Activated naive CD4-positive, alpha-beta T cell treated with anti-CD3 and anti-CD28 coated beads for 36 hours (primary cell): ENCODE measurements at regions of chr2 and their contacts with region 1.

Region 1: GRCh38 chr2:177332041-177332991 is 60.3 kb upstream of the AGPS start:
- DNase-seq: peak; percentile 58
- H3K4me3 Mint-ChIP-seq: no peak overlapping the region
- H3K27ac Mint-ChIP-seq: no peak overlapping the region
- H3K4me1 Mint-ChIP-seq: peaks cover 16% of the 10 kb centered on the region
- H3K27me3 Mint-ChIP-seq: no peaks in the 10 kb centered on the region

Region 2: DNA sequence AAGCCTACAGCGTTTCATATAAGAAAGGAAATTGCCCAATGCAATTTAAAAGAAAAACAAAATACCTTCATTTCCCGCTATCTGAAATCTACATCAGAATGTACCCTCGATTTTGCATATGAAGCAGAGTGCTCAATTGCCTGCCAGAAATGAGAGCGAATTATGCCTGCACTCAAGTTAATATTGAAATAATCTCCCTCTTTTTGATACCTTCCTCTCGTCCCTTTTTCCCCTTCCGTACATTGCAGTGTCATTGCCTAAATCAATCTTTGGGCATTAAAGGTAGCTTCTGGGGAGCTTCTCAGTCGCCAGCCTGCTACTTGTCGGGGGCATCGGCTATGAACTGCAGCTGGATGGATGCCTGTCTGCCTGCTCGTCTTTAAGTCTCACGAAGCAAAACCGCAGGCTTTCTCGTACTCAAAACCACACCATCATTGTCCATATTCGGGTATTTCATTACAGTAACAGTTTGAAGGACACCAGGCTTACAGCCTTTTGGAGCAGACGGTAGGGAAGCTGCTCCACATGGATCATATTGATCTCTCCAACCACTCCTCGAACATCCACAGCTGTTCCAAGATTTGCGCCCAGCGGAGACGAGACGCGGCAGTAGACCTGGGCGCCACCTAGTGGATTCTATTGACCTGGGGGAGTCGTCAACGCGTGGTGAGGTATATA is 183.7 kb before region 1 on chr2:
- CTCF ChIA-PET with region 1: interaction called, 17 read pairs
- intact Hi-C with region 1: no loop called
- DNase-seq: peak; percentile 85
- H3K4me3 Mint-ChIP-seq: peak overlapping the region; percentile 82
- H3K27ac Mint-ChIP-seq: no peak overlapping the region
- H3K4me1 Mint-ChIP-seq: peaks cover 10% of the 10 kb centered on the region
- H3K27me3 Mint-ChIP-seq: peaks cover 22% of the 10 kb centered on the region

Region 3: DNA sequence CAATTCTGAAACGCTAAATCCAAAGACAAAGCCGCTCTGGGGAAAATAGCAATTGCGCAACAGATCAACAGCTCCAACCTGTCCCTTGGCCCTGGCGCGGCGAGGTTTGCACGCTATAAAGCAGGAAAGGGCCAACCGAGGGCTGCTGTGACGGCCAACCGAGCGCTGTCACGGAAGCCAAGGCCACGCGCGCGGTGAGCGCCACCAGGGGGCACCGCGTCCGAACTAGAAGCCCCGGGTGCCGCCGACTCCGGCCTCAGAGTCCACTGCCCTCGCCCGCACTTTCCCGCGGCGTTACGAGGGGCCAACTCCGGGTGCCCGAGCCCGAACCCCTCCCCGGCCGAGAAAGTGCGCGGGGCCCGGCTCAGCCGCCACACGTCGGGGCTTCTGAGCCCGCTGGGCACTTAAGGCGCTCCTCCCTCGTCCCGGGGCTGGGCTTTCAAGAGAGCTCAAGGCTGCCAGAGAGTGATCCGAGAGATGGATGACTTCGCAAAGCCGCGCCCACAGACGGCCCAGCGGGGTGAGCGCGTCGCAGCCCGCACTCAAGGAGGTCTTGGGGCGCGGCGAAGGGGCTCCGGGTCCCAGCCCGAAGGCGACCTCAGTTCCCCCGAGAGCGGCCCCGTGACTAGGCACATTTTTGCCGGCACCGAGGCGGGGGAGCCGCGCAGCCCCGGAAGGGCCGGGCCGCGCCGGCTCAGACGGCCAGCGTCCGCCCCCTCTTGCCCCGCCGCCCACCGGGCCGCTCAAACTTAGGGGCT is 68.7 kb before region 1 on chr2:
- CTCF ChIA-PET with region 1: interaction called, 25 read pairs
- intact Hi-C with region 1: loop called (anchors 1 kb)
- DNase-seq: peak; percentile 95
- H3K4me3 Mint-ChIP-seq: peak overlapping the region; percentile 92
- H3K27ac Mint-ChIP-seq: peak overlapping the region; percentile 99
- H3K4me1 Mint-ChIP-seq: peaks cover 53% of the 10 kb centered on the region
- H3K27me3 Mint-ChIP-seq: no peaks in the 10 kb centered on the region

Region 4: DNA sequence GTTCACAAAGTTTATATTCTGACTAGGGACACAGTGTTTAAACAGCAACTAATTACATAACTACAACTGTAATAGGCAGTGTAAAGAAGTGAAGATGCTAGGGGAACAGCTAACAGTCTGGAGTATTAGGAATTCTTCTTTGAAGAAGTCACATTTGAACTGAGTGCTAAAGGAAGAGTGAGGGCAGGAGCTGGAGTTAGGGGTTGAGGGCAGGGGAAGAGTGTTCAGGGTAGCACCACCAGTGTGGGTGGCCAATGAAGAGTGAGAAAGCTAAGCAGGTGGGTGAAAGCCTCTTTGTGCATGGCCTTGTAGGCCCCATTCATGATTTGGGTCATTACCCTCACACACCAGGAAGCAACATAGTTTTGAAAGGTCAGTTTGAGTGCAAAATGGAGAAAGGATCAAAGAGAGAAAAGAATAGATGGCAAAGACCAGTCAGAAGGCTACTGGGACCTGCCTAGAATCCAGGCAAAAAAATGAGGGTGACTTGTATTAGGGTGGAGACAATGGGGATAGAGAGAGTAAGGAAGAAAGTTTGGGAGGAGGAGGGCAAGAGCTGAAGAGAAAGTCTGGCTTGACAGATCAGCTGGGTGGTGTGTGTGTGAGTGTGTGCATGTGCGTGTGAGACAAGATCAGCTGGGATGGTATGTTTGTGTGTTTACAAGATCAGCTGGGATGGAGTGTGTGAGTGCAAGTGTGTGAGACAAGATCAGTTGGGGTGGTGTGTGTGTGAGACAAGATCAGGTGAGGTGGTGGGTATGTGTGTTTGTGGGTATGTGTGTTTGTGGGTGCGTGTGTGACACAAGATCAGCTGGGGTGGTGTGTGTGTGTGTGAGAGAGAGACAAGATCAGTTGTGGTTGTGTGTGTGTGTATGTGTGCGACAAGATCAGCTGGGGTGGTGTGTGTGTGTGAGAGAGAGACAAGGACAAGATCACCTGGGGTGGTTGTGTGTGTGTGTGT is 16.7 kb after region 1 on chr2:
- CTCF ChIA-PET with region 1: interaction called, 11 read pairs
- intact Hi-C with region 1: no loop called
- DNase-seq: no peak
- H3K4me3 Mint-ChIP-seq: no peak overlapping the region
- H3K27ac Mint-ChIP-seq: no peak overlapping the region
- H3K4me1 Mint-ChIP-seq: peaks cover 9% of the 10 kb centered on the region
- H3K27me3 Mint-ChIP-seq: no peaks in the 10 kb centered on the region

Region 5: DNA sequence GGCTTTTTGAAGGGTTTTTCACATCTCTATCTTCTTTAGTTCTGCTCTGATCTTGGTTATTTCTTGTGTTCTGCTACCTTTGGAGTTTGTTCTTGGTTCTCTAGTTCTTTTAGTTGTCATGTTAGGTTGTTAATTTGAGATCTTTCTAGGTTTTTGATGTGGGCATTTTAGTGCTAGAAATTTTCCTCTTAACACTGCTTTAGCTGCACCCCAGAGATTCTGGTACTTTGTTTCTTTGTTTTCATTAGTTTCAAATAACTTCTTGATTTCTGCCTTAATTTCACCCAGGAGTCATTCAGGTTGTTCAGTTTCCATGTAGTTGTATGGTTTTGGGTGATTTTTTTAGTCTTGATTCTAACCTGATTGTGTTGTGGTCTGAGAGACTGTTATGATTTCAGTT is 95.0 kb after region 1 on chr2:
- CTCF ChIA-PET with region 1: no interaction called
- intact Hi-C with region 1: no loop called
- DNase-seq: no peak
- H3K4me3 Mint-ChIP-seq: no peak overlapping the region
- H3K27ac Mint-ChIP-seq: no peak overlapping the region
- H3K4me1 Mint-ChIP-seq: peaks cover 11% of the 10 kb centered on the region
- H3K27me3 Mint-ChIP-seq: no peaks in the 10 kb centered on the region

Region 6: GRCh38 chr2:177552422-177553175 is 220.3 kb after region 1 on chr2:
- CTCF ChIA-PET with region 1: no interaction called
- intact Hi-C with region 1: loop called (anchors 1 kb)
- DNase-seq: peak; percentile 93
- H3K4me3 Mint-ChIP-seq: peak overlapping the region; percentile 88
- H3K27ac Mint-ChIP-seq: peak overlapping the region; percentile 99
- H3K4me1 Mint-ChIP-seq: peaks cover 8% of the 10 kb centered on the region
- H3K27me3 Mint-ChIP-seq: no peaks in the 10 kb centered on the region

Region 7: GRCh38 chr2:177724398-177725287 is 392.3 kb after region 1 on chr2:
- CTCF ChIA-PET with region 1: interaction called, 48 read pairs
- intact Hi-C with region 1: loop called (anchors 1 kb)
- DNase-seq: peak; percentile 72
- H3K4me3 Mint-ChIP-seq: no peak overlapping the region
- H3K27ac Mint-ChIP-seq: no peak overlapping the region
- H3K4me1 Mint-ChIP-seq: peaks cover 2% of the 10 kb centered on the region
- H3K27me3 Mint-ChIP-seq: peaks cover 11% of the 10 kb centered on the region